ENCODE measurements at regions of chr1 and their contacts with region 1.

Region 1: DNA sequence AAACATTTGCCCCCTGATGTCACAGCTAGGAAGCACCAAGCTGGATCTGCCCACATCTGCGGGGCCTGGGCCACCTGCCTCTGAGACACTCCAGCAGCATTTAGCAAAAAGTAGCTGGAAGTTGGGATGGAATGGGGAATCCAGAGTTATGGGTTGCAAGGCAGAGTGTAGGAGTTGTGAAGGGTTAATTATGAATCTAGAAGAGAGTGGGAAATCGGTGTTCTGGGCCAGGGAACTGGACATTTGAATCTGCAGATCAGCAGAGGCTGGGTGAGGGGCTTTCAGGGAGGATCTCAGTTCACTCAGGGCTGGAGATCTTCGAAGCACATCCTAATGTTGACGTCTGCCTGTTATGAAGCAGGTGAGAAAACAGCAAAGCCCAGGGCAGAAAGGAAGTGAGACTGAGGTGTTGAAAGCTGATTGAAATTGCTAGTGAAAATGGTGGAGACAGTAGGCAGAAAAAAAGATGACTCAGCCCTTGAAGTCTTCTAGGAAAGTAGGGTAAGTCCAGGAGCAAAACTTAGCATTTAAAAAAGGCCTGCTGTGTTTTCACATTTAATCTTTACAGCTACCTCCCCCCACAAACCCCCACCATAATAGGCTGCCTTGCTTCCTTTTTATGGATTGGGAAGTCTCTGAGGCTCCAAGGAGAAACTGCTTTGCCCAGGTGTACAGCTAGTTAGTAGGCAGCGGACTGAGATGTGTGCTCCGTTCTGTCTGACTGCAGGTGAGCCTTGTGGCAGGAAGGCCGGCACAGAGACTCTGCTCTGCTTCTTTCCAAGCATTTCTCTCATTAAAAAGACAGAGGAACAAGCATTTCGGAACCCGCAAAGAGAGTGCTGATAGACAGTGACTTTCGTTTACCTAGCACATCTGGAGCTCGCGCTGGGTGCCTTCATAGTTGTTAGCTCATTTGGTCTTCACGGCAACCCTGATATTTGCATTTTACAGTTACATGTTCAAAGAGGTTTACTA is 7.2 kb downstream of the VANGL1 start:
- DNase-seq: no peak
- ATAC-seq: no peak

Region 2: DNA sequence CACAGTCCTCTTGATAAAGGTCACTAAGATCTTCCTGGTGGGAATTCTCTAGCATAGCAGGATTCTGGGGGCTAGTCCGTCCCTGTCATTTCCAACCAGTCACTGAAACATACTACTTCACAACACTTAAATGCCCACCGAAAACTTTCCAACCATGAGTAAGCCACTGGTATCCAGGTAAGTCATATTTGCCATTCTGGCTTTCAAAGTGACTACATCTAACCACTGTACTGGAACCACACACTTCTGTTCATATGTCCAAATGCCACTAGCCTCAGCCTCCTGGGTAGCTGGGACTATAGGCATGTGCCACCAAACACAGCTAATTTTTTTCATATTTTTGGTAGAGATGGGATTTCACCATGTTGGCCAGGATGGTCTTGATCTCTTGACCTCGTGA is 71.5 kb before region 1 on chr1:
- intact Hi-C with region 1: no loop called
- DNase-seq: no peak
- ATAC-seq: no peak

Region 3: DNA sequence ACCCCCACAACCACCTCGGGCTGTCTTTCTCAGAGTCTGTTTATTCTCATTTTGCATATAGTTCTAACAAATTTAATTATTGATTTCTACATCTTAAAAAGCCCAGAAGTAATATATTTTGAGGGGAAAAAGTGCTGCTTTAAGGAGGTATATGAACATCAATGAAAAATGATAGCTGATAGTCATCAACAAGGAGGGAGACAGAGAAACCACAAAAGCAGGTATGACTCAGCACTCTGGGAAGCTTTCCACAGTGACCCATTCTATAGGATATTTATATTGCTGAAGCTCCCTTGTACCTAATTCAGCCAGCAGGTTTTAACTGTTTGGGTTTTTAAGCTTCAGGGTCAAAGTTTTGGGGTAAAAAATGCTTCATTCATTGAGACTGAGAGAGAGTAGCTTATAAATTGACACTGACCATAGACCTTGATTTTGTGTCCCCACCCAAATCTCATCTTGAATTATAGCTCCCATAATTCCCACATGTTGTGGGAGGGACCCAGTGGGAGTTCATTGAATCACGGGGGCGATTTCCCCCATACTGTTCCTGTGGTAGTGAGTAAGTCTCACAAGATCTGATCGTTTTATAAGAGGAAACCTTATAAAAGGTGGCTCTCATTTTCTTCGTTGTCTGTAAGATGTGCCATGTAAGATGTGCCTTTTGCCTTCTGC is 20.1 kb after region 1 on chr1:
- intact Hi-C with region 1: no loop called
- DNase-seq: no peak
- ATAC-seq: no peak

Region 4: DNA sequence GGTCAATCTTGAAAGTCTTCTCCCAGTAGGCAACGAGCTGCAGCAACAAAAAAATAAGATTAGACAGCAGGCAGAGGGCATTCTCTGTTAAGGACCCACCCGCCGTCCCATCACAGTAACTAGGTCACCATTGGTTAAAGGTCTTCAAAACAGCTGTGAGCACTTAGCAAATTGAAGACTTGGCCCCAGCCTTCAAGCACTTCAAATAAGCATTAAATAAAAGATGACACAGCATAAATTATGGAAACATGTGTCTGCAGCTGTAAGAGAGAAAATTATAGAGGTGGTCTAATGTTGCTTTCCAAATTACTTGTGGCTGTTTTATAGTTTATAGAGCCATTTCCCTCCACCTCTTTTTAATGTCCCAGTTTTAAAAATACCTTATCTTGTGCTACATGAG is 54.0 kb after region 1 on chr1:
- intact Hi-C with region 1: loop called (anchors 5 kb)
- DNase-seq: no peak
- ATAC-seq: no peak

Measured in Right ventricle myocardium inferior (tissue), 1 donor.